ENCODE measurements at regions of chr17 and their contacts with region 1.

Region 1: DNA sequence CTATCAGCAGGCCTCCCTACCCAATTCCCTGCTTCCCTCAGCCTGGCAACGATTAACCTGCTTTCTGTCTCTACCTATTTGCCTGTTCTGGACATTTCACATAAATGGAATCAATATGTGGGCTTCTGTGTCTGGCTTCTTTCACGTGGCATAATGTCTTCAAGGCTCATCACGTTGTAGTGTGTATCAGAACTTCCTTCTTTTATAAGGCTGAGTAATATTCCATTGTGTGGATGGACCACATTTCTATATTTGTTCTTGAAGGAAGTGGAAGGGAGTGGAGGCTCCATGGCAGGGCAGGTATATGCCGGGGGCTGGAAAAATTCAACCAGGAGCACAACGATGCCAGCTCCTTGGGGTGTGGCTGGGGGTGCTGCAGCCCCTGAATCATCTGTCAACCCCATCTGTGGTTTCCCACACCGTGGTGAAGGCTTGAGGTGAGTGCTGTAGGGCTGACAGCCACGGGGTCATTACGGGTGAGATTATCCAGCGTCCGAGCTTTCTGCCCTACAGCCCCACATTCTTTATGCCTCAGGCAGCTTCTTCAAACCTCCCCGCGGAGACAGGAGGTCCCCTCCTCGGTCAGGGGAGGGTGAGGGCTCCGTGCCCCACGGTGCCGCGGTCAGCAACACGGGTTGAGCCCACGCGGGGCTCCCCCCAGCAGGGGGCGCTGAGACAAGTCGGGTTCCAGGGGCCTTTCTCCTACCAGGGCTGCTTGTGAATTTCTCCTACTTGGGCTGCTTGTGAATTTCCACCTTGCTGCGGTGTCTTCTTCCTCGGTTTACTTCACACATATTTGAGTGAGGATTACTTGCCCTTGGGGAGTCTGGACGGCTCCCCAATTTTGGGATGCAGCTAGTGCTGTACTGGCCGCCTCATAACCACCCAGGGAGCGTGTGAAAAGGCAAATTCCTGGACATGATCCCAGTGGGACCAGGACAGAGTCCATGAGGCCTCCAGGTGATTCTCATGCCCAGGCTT is 18.3 kb upstream of the WFIKKN2 start:
- H3K4me3 ChIP-seq: no peak overlapping the region
- H3K27ac ChIP-seq: no peak overlapping the region
- H3K4me1 ChIP-seq: no peaks in the 10 kb centered on the region
- CTCF ChIP-seq: peak; percentile 49; the same call in 1 of the 2 replicates

Region 2: GRCh38 chr17:49763735-49764558 is 1053.1 kb before region 1 on chr17 and contains the start of gene FAM117A:
- CTCF ChIA-PET with region 1: no interaction called
- POLR2A ChIA-PET with region 1: no interaction called
- H3K4me3 ChIP-seq: peak within 1 kb of the TSS; percentile 73
- H3K27ac ChIP-seq: no peak within 1 kb of the TSS
- H3K4me1 ChIP-seq: peaks cover 9% of the 10 kb centered on the region; the same call in 1 of the 2 replicates
- CTCF ChIP-seq: no peak

Region 3: GRCh38 chr17:50806141-50806643 is 10.9 kb before region 1 on chr17:
- CTCF ChIA-PET with region 1: interaction called, 20 read pairs
- POLR2A ChIA-PET with region 1: no interaction called
- H3K4me3 ChIP-seq: no peak overlapping the region
- H3K27ac ChIP-seq: no peak overlapping the region
- H3K4me1 ChIP-seq: no peaks in the 10 kb centered on the region; the same call in 1 of the 2 replicates
- CTCF ChIP-seq: no peak

Region 4: GRCh38 chr17:50828508-50829170 is 11.6 kb after region 1 on chr17:
- CTCF ChIA-PET with region 1: interaction called, 14 read pairs
- POLR2A ChIA-PET with region 1: no interaction called
- H3K4me3 ChIP-seq: no peak overlapping the region
- H3K27ac ChIP-seq: no peak overlapping the region
- H3K4me1 ChIP-seq: no peaks in the 10 kb centered on the region
- CTCF ChIP-seq: no peak

Region 5: DNA sequence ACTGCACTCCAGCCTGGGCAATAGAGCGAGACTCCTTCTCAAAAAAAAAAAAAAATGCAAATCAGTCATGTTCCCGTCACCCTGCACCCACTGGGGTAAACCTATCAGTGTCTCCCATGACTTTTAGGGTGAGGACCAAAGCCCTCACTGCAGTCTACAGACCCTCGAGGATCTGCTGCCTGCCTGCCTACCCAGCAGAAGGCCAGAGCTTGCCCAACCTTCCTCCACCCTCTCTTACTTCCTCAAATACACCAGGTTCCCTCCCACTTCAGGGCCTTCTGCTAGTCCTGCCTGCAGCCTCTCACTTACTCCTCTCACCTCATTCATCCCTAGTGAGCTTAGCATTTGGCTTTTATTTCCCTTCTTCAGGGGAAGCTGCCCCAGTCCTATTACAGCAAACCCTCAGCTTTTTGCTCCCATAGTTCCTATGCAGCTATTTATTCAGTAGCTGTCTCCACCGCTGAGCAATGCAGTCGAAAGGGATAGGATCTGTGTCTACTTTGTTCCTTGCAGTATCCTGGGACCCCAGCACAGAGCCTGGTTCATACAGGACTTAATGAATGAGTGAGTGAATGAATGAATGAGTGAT is 66.9 kb after region 1 on chr17:
- CTCF ChIA-PET with region 1: no interaction called
- POLR2A ChIA-PET with region 1: no interaction called
- H3K4me3 ChIP-seq: no peak overlapping the region
- H3K27ac ChIP-seq: no peak overlapping the region
- H3K4me1 ChIP-seq: no peaks in the 10 kb centered on the region
- CTCF ChIP-seq: no peak

Region 6: DNA sequence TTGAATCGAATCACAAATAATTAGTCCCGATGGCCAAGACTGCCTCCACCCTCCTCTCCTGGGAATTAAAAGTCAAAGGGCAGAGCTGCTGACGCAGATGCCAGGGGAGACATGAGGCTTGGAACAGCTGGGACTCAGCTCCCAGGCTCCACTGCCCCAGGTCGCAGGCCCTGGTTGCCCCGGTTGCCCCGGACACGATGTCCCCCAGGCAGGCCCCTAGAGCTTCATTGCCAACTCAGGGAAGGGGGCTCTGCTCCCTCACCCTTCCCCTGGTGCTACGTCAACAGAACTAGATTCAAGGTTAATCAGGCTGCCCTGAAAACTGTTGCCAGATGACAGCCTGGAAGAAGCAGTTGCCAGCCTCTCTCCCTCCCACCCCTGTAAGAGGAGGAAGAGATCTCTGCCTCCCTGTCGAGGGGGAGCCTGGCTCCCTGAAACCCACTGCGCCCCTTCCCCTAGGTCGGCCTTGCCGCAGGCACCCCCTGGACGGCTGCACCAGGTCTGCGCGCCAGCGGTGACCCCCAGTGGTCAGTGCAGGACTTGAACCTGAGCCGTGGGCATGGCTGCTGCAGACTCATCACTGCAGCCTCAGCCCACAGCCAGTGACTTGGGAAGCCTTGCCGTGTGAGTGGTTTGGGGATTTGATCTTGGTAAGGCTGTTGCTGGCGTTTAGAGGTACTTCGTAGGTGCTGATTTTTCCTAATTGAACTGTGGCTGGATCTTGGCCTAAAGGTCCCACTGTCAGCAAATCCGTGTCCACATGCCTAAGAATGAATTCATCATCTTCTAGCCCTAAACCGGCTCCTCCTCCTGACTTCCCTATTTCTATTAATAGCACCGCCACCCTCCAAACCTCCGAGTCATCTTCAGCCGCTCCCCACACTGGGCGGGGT is 133.2 kb after region 1 on chr17:
- CTCF ChIA-PET with region 1: interaction called, 12 read pairs
- POLR2A ChIA-PET with region 1: no interaction called
- H3K4me3 ChIP-seq: no peak overlapping the region
- H3K27ac ChIP-seq: peak overlapping the region; percentile 44; the same call in 1 of the 2 replicates
- H3K4me1 ChIP-seq: no peaks in the 10 kb centered on the region; the same call in 1 of the 2 replicates
- CTCF ChIP-seq: peak; percentile 94